Gastrocnemius medialis (tissue), 4 donors: ENCODE measurements at regions of chr2 and their contacts with region 1.

Region 1: DNA sequence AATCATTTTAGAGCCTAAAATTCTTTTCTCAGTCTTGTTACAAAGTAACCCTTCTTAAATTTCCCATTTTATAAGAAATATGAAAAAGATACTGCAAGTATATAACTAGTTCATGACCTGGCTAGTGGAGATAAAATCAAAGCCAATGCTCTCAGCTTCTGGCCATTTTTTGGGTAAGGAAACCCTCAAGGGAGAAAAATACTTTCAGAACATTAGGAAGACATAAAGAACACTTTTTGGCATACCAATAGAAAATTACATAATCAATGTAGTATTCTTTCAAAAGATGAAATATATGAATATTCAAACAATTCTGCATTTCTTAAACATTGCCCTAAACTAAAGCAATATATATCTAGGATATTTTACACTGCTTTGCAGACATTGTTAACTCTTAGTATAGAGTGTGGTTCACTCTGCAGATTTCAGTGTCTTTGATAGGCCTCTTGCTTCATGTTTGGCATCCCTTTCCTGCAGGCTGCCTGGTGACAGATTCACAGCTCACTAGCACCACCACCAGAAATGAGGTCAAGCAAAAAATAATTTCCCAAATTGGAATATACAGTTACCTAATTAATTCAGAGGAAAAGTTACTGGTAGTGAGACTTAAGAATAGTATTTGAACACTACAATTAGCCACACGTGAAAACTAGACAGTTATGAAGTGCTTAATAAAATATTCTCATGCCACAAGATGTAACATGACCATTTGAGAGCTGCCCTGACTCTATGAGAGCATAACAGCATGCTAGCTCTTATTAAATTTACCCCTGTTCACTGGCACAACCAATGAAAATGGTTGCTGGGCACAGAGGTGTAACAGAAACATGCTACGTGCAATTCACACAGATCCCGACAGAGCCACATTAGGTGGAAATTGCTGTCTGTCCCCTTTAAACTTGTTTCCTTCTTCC is 36.0 kb downstream of the PAIP2B start:
- DNase-seq: peak in 1 of 2 donors; percentile 23
- ATAC-seq: peak; percentile 65 to 85
- H3K4me3 ChIP-seq: no peak overlapping the region
- H3K27ac ChIP-seq: peak overlapping the region in 3 of 4 donors; percentile 12 to 43 (median 30)
- H3K4me1 ChIP-seq: peaks cover 6 to 9% of the 10 kb centered on the region in 2 donors
- H3K27me3 ChIP-seq: no peaks in the 10 kb centered on the region
- CTCF ChIP-seq: peak in 3 of 5 experiments; percentile 10 to 46 (median 36)
- POLR2A ChIP-seq: no peak

Region 2: DNA sequence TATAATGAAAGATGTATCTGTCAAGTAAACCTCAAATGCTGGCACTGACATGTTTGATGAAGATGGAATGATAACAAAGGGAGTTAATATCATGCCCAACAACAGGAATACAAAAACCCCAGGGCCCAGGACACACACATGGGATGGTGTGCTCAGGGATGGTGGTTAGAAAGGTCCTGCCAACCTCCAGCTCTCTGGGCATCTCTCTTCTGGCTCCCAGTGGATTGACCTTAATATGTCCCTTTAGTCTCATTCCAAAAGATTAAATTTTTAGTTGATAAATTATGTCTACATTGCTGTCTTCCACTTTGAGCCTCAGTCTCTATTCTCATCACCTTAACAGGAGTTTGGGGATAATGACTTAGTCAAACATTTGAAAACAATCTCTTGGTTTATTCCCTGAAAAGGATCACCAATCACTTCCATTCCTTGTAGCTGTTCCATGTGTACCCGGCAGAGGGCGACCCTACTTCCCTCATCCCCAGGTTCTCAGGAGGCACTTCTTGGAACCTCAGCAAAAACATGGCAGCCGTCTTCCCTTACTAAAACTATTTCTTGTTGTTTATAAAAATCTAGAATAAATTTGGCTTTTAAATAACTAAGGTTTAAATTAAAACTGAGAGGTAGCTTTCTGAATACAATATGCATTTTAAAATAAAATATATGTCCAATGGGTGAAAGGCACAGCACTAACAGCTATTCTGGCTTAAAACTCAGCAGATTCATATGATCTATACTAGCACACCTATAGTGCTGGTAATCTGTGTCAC is 90.5 kb before region 1 on chr2:
- in situ Hi-C with region 1: loop called in 1 of 4 experiments (anchors 10 kb)
- intact Hi-C with region 1: loop called (anchors 1 kb)
- DNase-seq: peak; percentile 18 to 24
- ATAC-seq: peak in 1 of 2 donors; percentile 82
- H3K4me3 ChIP-seq: no peak overlapping the region
- H3K27ac ChIP-seq: no peak overlapping the region
- H3K4me1 ChIP-seq: no peaks in the 10 kb centered on the region
- H3K27me3 ChIP-seq: no peaks in the 10 kb centered on the region
- CTCF ChIP-seq: peak in 4 of 5 experiments; percentile 54 to 73 (median 62)
- POLR2A ChIP-seq: no peak